ENCODE measurements at regions of chr2 and their contacts with region 1.

Region 1: DNA sequence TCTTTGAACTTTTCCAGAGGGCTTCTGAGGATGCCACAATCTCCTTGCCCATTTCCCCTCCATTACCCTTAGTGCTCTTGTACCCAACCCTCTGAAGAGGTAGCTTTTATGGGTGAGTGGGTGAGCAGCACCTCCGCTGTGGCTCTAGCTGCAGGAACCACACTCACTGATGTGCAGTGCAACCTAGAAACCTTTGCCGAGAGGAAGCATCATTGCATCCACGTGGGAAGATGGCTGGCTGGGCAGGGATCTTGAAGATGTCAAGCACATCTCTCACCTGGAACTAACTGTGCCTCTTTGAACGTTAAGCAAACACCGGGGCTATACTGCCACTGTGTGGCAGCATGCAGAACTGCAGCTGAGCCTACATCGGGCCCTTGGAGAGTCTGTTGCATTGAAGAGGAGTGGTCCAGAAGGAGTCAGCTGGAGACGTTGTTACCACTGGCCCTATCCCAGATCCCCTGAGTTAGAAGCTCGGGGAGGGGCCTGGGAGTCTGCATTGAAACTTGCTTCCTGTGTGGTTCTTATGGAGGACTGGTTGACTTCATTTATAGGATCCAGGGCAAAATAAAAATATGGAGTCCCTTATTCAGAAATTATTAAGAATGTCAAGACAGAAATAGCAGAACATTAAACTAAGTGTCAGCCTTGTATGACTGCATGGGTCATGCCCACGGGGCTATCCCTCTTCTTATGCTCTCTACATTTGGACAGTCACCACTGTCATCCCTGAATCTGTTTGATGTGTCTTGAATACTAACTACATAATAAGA is 28.7 kb downstream of the IGFBP5 start:
- DNase-seq: no peak
- H3K4me3 ChIP-seq: no peak overlapping the region
- H3K27ac ChIP-seq: no peak overlapping the region
- H3K4me1 ChIP-seq: peaks cover 22% of the 10 kb centered on the region
- H3K27me3 ChIP-seq: no peaks in the 10 kb centered on the region
- CTCF ChIP-seq: peak; percentile 92 to 99 (median 96)
- POLR2A ChIP-seq: peak in 1 of 2 donors; percentile 2

Region 2: GRCh38 chr2:216519154-216519762 is 147.4 kb before region 1 on chr2:
- intact Hi-C with region 1: loop called (anchors 2 kb)
- DNase-seq: no peak
- H3K4me3 ChIP-seq: no peak overlapping the region
- H3K27ac ChIP-seq: no peak overlapping the region
- H3K4me1 ChIP-seq: no peaks in the 10 kb centered on the region
- H3K27me3 ChIP-seq: no peaks in the 10 kb centered on the region
- CTCF ChIP-seq: peak in 2 of 3 experiments; percentile 64 to 80
- POLR2A ChIP-seq: no peak

Region 3: GRCh38 chr2:217049956-217050355 is 383.3 kb after region 1 on chr2:
- intact Hi-C with region 1: no loop called
- DNase-seq: no peak
- H3K4me3 ChIP-seq: no peak overlapping the region
- H3K27ac ChIP-seq: no peak overlapping the region
- H3K4me1 ChIP-seq: peaks cover 19% of the 10 kb centered on the region
- H3K27me3 ChIP-seq: no peaks in the 10 kb centered on the region
- CTCF ChIP-seq: no peak
- POLR2A ChIP-seq: no peak